Aorta (tissue), 5 donors: ENCODE measurements at regions of chr15 and their contacts with region 1.

Region 1: DNA sequence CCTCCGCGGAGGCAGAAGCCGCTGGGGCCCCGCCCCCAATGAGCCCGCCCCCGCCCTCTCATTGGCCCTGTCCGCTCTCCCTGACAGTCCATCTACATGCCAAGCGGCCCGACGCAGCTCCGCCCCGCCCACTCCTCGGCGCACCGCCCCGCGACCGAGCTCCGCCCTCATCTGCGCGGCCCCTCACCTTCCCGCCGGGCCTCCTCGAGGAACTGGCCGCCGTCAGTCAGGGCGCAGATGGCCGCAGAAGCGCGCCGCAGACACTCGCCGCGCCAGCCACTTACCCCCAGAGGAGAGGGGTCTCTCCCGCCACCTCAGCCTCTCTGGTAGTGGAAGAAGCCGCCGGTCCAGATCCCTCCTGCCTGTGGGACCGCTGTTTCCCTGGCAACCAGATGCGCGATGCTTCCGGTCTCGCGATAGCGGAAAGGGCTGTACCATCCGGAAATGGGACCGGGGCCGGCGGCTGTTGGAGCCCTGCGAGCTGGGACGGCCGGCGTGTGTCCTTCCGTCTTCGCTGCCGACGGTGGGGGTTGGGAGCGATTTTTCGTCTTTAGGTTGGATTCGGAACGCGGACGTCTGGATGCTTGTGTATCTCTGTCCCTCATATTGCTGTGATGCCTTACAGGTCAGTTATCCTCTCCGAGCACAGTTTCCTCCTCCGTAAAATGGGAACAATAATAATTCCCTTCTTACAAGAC is at the start of gene FSIP1:
- DNase-seq: peak; percentile 98 to 99
- ATAC-seq: peak; percentile 100
- H3K4me3 ChIP-seq: peak within 1 kb of the TSS; percentile 41 to 90
- H3K27ac ChIP-seq: peak within 1 kb of the TSS in 1 of 2 donors; percentile 55
- H3K4me1 ChIP-seq: no peaks in the 10 kb centered on the region
- H3K27me3 ChIP-seq: no peaks in the 10 kb centered on the region
- total RNA-seq, gene FSIP1: 1.2 TPM

Region 2: DNA sequence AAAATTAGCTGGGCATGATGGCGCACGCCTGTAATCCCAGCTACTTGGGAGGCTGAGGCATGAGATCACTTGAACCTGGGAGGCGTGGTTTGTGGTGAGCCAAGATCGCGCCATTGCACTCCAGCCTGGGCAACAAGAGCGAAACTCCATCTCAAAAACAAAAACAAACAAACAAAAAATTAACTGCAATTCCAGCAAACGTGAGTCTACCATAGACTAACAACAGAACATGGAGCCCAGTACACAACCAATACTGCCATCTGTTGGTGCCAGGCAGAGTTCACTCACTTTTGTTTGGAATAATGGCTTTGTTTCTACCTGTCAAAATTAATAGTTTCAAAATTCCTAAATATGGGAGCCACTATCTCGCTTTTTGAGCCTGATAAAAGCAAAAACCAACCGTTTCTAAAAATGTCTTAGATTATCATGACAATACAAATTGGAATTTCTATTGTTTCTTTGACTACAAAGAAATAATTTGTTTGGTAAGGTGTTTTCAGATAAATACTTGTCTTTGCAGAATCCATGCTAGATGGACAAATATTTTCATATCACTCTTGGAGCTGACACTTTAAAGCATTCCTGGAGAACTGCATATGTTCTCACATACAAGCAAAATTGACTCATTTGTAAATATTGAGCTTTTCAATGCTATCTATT is 92.4 kb after region 1 on chr15:
- intact Hi-C with region 1: loop called in 1 of 2 experiments (anchors 5 kb)
- DNase-seq: no peak
- ATAC-seq: no peak
- H3K4me3 ChIP-seq: no peak overlapping the region
- H3K27ac ChIP-seq: no peak overlapping the region
- H3K4me1 ChIP-seq: peaks cover 1 to 3% of the 10 kb centered on the region in 2 donors
- H3K27me3 ChIP-seq: no peaks in the 10 kb centered on the region

Region 3: DNA sequence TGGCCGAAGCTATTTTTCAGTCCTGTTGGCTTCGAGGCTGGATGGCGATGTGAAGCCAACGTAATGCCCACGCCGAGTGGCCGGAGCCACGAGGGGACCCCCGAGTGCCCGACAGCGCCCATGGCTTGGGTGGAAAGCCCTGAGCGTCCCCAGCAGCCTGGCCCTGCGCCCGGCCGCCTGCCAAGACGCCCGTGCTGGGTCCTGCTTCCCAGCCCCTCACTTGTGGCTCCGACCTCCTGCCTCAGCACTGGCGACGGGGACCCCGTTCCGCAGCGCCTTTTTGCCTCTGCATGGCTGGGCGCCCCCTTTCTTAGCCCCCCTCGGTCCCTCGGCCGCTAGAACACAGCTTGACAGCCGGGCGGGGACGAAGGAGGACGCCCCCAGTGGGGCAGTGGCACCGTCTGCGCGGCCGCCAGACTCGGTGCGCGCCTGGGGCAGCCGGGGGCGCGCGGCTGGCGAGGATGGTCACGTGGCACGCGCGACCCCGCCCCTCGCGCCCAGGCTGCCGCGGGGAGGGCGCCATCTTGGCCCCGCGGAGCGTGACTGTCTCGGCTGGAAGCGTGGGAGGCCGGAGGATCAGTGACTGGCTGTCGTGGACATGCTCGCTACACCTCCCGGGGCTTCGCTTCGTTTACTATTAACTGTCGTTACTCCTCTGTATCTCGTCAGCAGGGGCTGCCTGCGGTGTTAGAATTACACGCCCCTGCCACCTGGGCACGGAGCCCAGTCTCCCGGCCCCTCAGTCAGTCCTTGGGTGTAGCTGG is 138.1 kb after region 1 on chr15:
- intact Hi-C with region 1: loop called (anchors 5 kb)
- DNase-seq: peak; percentile 88 to 94
- ATAC-seq: peak; percentile 96
- H3K4me3 ChIP-seq: peak overlapping the region; percentile 75 to 93
- H3K27ac ChIP-seq: peak overlapping the region; percentile 15 to 90
- H3K4me1 ChIP-seq: no peaks in the 10 kb centered on the region
- H3K27me3 ChIP-seq: no peaks in the 10 kb centered on the region

Region 4: GRCh38 chr15:39976291-39977274 is 194.0 kb after region 1 on chr15:
- intact Hi-C with region 1: loop called in 1 of 2 experiments (anchors 5 kb)
- DNase-seq: peak; percentile 62 to 89
- ATAC-seq: peak; percentile 87
- H3K4me3 ChIP-seq: peak overlapping the region; percentile 1 to 15
- H3K27ac ChIP-seq: no peak overlapping the region
- H3K4me1 ChIP-seq: no peaks in the 10 kb centered on the region
- H3K27me3 ChIP-seq: no peaks in the 10 kb centered on the region

Region 5: DNA sequence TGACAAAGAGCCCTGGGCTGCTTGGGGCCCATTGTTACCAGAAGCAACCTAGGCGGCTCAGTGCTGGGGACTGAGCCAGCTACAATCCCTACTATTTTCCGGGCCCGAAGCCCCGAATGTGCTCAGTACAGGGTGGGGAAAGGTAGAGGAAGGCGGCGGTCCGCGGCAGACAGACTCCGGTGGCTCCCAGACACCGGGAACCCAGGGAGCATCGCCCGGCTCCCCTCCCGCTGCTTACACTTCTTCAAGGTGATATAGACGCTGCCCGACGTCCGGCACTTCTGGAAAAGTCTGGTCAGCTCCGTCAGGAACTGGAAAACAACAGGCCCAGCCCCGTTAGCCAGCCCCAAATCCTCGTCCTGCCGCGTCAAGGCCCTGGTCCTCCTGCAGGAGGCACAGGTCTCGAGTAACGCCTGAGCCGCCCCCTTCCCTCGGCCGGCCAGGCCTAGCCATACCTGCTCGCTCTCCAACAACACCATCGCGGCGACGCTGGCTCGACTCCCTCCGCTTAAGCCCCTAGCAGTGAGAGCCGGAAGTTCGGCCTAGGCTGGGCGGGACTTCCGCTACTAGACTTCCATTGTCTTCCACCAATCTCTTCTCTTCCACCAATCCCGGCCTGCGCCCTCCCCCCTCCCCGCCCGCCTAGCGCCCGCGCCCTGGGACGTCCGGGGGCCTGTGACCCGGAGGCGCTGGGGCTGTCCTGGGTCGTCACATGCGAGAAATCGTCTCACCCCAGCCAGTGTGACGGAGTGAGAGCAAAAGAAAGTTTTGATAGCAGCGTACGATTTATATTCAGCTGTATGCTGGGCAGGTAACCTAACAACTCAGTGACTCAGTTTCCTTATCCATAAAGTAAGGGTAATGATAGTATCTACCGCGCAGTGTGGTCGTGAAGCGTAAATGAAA is 256.3 kb after region 1 on chr15 and contains the start of gene SRP14:
- intact Hi-C with region 1: loop called in 1 of 2 experiments (anchors 10 kb)
- DNase-seq: peak; percentile 96 to 98
- ATAC-seq: peak; percentile 98
- H3K4me3 ChIP-seq: peak within 1 kb of the TSS; percentile 65 to 83
- H3K27ac ChIP-seq: peak within 1 kb of the TSS; percentile 10 to 84
- H3K4me1 ChIP-seq: peaks cover 2 to 3% of the 10 kb centered on the region in 2 donors
- H3K27me3 ChIP-seq: no peaks in the 10 kb centered on the region
- total RNA-seq, gene SRP14: 154 to 161 TPM

Region 6: DNA sequence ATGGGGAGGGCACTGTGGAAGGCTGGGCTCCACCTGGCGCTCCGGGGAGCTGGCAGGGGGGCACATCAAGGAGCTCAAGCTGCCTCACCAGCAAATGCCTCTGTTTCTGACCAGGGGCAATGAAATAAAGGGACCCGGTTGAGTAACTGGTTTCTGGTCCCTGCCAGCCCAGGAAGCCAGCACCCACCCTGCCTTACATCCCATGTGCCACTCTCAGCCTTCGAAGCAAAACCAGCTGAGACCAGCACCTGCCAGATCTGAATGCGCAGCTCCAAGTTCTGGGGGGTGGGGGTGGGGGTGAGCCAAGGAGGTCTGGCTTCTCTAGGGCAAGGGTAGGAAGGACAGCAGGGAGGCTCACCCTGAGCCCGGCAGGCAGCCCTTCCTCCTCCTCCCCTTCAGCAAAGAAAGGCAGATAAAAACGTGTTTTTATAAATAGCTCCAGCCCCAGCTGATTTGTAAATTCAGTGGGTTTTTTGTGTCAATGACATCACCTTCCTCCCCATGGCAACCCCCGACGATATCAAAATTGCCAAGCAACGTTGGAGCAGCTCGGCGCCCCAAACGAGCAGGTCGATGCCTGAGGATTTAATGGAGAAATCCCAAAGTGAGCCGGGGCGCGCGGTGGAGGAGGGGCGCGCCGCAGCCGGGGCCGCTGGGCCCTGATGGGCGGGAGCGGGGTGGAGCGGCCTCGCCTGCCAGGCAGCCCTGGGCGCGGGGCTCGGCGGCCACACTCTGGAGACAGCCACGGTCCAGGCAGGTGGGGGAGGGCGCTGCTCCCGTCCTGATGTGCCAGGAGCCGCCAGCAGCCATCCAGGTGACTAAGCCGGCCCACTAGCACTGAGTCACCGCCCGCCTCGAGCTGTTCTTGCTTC is 456.2 kb after region 1 on chr15 and contains the start of gene PAK6:
- intact Hi-C with region 1: no loop called
- DNase-seq: peak in 1 of 2 donors; percentile 66
- ATAC-seq: peak; percentile 62
- H3K4me3 ChIP-seq: no peak within 1 kb of the TSS
- H3K27ac ChIP-seq: no peak within 1 kb of the TSS
- H3K4me1 ChIP-seq: no peaks in the 10 kb centered on the region
- H3K27me3 ChIP-seq: no peaks in the 10 kb centered on the region
- total RNA-seq, gene PAK6: 0.81 to 0.91 TPM